Vagina (tissue), 2 donors: ENCODE measurements at regions of chr7 and their contacts with region 1.

Region 1: GRCh38 chr7:121113288-121113687 is 124.8 kb downstream of the CPED1 start:
- DNase-seq: no peak
- H3K4me3 ChIP-seq: no peak overlapping the region
- H3K27ac ChIP-seq: no peak overlapping the region
- H3K4me1 ChIP-seq: no peaks in the 10 kb centered on the region
- H3K27me3 ChIP-seq: no peaks in the 10 kb centered on the region
- CTCF ChIP-seq: no peak
- POLR2A ChIP-seq: no peak

Region 2: GRCh38 chr7:120792091-120792860 is 321.0 kb before region 1 on chr7:
- intact Hi-C with region 1: loop called (anchors 10 kb)
- DNase-seq: no peak
- H3K4me3 ChIP-seq: no peak overlapping the region
- H3K27ac ChIP-seq: no peak overlapping the region
- H3K4me1 ChIP-seq: peaks cover 6% of the 10 kb centered on the region
- H3K27me3 ChIP-seq: no peaks in the 10 kb centered on the region
- CTCF ChIP-seq: peak; percentile 37 to 46 (median 40)
- POLR2A ChIP-seq: no peak